H1 (cell line): ENCODE measurements at regions of chr5 and their contacts with region 1.

Region 1: GRCh38 chr5:131005963-131006684 is 158.9 kb downstream of the HINT1 start:
- DNase-seq: no peak
- H3K4me3 ChIP-seq: no peak overlapping the region
- H3K27ac ChIP-seq: no peak overlapping the region
- H3K4me1 ChIP-seq: no peaks in the 10 kb centered on the region
- H3K27me3 ChIP-seq: no peaks in the 10 kb centered on the region
- CTCF ChIP-seq: peak in 2 of 3 experiments; percentile 42 to 47; a peak in 3 of 4 replicates
- EP300 ChIP-seq: no peak
- POLR2A ChIP-seq: no peak
- RAD21 ChIP-seq: peak; percentile 74 to 76

Region 2: DNA sequence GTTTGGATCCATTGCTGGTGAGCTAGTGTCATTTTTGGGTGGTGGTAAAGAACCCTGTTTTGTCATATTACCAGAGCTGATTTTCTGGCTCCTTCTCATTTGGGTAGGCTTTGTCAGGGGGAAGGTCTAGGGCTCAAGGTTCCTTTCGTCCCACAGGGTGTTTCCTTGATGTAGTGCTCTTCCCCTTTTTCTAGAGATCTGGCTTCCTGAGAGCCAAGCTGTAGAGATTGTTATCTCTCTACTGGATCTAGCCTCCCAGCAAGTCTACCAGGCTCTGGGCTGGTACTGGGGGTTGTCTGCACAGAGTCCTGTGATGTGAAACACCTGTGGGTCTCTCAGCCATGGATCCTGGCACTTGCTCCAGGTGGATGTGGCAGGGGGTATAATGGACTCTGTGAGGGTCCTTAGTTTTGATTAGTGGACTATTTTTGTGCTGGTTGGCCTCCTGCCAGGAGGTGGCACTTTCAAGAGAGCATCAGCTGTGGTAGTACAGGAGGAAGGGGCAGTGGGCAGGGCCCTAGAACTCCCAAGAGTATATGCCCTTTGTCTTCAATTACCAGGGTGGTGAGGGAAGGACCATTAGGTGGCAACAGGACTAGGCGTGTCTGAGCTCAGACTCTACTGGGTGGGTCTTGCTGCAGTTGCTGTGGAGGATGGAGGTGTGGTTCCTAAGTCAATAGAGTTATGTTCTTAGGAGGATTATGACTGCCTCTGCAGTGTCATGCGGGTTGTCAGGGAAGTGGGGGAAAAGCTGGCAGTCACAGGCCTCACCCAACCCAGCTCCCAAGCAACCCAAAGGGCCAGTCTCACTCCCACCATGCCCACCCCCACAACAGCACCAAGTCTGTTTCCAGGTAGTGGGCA is 13.2 kb after region 1 on chr5:
- CTCF ChIA-PET with region 1: interaction called, 11 read pairs
- POLR2A ChIA-PET with region 1: no interaction called
- DNase-seq: no peak
- H3K4me3 ChIP-seq: no peak overlapping the region
- H3K27ac ChIP-seq: no peak overlapping the region
- H3K4me1 ChIP-seq: no peaks in the 10 kb centered on the region
- H3K27me3 ChIP-seq: no peaks in the 10 kb centered on the region
- CTCF ChIP-seq: no peak
- EP300 ChIP-seq: no peak
- POLR2A ChIP-seq: no peak
- RAD21 ChIP-seq: peak; percentile 4 to 14; a peak in 2 of 4 replicates